ENCODE measurements at regions of chr7 and their contacts with region 1.

Region 1: GRCh38 chr7:37901236-37901827 is 15.3 kb downstream of the SFRP4 start:
- DNase-seq: no peak
- H3K4me3 ChIP-seq: no peak overlapping the region
- H3K27ac ChIP-seq: peak overlapping the region; percentile 16
- H3K4me1 ChIP-seq: no peaks in the 10 kb centered on the region
- H3K27me3 ChIP-seq: no peaks in the 10 kb centered on the region
- CTCF ChIP-seq: peak; percentile 30 to 62 (median 57)
- POLR2A ChIP-seq: no peak

Region 2: DNA sequence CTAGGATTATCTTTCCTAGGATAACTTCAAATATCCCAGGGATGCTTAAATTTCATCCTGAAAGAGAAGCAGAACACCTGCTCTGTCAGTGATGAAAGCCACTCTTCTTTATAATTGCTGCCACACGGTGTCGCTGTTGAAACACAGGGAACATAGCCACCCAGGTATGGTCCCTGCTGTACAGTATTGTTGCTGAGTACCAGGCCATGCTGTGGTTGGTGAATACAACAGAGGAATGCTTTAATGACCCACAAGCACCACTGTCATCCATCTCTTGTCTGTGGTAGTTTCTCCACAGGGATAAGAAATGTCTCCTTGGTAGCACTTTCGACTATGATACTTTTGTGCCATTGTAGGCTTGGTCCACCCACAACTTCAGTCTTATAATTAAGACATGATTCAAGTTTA is 206.2 kb after region 1 on chr7:
- intact Hi-C with region 1: loop called (anchors 10 kb)
- DNase-seq: no peak
- H3K4me3 ChIP-seq: no peak overlapping the region
- H3K27ac ChIP-seq: no peak overlapping the region
- H3K4me1 ChIP-seq: no peaks in the 10 kb centered on the region
- H3K27me3 ChIP-seq: no peaks in the 10 kb centered on the region
- CTCF ChIP-seq: peak; percentile 62 to 80 (median 79)
- POLR2A ChIP-seq: no peak

Region 3: DNA sequence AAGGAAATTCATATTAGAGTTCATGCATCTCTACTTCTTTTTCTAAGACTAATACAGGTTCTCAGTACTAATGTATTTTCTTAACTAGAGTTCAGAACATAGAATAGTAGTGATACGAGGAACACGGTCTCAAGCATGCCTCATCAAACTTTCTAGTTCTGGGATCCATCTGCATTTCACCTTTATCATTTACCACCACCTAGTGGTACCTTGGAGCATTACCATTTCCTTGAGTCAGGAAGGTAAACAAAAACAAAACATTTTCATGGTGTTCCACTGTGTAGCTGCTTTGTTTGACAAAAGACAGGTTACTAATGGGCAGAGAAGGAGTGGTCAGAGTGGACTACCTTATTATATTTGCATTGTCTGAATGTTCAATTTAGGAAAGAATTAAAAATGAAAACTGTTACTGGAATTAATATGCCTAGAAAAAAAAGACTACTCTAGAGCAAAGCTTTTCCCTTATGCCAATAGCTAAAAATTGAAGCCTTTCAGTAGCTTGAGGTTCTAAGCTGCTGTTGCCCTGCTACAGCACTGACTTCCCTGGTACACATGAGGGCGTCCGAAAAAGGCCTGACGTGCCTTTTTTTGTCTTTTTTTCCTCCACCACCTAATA is 321.3 kb after region 1 on chr7:
- intact Hi-C with region 1: loop called (anchors 5 kb)
- DNase-seq: no peak
- H3K4me3 ChIP-seq: no peak overlapping the region
- H3K27ac ChIP-seq: no peak overlapping the region
- H3K4me1 ChIP-seq: no peaks in the 10 kb centered on the region
- H3K27me3 ChIP-seq: no peaks in the 10 kb centered on the region
- CTCF ChIP-seq: peak; percentile 73 to 92 (median 91)
- POLR2A ChIP-seq: no peak

Measured in vagina (tissue), 2 donors.